A549 (cell line): ENCODE measurements at regions of chr1 and their contacts with region 1.

Region 1: GRCh38 chr1:235513495-235514366 is 9.5 kb upstream of the B3GALNT2 start:
- DNase-seq: peak; percentile 38 to 74
- ATAC-seq: peak; percentile 71 to 79; a peak in 5 of 6 replicates
- H3K4me3 ChIP-seq: no peak overlapping the region
- H3K27ac ChIP-seq: no peak overlapping the region
- H3K4me1 ChIP-seq: no peaks in the 10 kb centered on the region
- CTCF ChIP-seq: peak; percentile 96
- EP300 ChIP-seq: no peak
- POLR2A ChIP-seq: no peak
- RAD21 ChIP-seq: peak; percentile 86 to 88

Region 2: GRCh38 chr1:235527196-235527814 is 13.6 kb after region 1 on chr1:
- CTCF ChIA-PET with region 1: interaction called, 14 read pairs
- POLR2A ChIA-PET with region 1: no interaction called
- DNase-seq: no peak
- ATAC-seq: no peak
- H3K4me3 ChIP-seq: no peak overlapping the region
- H3K27ac ChIP-seq: no peak overlapping the region
- H3K4me1 ChIP-seq: peaks cover 2% of the 10 kb centered on the region; the same call in 2 of the 3 replicates
- CTCF ChIP-seq: no peak
- EP300 ChIP-seq: no peak
- POLR2A ChIP-seq: no peak
- RAD21 ChIP-seq: no peak

Region 3: DNA sequence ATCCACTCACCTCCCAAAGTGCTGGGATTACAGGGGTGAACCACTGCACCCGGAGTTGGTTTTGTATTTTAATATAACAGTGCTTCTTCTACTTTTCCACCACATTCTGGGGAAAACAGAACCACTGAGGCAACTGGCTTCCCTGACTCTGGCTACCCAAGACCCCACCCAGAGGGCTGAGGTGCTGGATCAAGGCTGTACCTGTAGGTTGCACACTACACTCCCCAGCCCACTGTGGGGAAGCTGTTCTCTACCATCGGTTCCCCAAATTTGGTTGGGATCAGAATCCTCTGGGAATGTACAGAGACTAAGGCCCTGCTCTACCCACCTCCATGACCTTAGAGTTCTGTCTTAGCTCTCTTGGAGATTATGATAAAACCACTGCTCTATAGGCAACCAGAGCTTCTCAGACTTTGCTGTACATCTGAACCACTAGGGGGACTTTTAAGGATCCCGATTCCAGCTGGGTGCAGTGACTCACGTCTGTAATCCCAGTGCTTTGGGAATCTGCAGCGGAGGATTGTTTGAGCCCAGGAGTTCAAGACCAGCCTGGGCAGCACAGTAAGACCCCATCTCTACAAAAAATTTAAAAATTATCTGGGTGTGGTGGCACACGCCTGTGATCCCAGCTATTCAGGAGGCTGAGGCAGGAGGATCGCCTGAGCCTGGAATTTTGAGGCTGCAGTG is 84.3 kb after region 1 on chr1:
- CTCF ChIA-PET with region 1: interaction called, 12 read pairs
- POLR2A ChIA-PET with region 1: no interaction called
- DNase-seq: peak; percentile 58 to 71
- ATAC-seq: peak; percentile 92 to 93
- H3K4me3 ChIP-seq: no peak overlapping the region
- H3K27ac ChIP-seq: no peak overlapping the region
- H3K4me1 ChIP-seq: no peaks in the 10 kb centered on the region
- CTCF ChIP-seq: peak; percentile 46
- EP300 ChIP-seq: no peak
- POLR2A ChIP-seq: no peak
- RAD21 ChIP-seq: peak; percentile 30 to 42; a peak in 3 of 5 replicates

Region 4: DNA sequence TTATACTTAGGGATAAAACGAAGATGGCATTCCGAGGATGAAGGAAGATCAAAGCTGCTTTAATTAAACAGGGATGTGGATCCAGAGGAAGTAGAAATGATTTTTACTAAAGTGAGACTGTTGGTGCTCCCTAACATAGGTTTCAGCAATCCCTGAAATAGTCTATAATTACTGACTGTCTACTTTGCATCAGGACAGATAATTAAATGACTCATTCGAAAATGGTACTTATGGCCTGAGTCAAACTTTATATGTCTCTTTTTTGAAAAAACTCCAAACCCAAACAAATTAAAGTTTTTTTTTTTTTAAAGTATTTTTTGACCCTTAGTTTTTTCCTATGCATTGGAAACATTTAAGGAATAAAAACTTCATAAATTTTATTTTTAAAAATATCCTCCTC is 262.7 kb after region 1 on chr1:
- CTCF ChIA-PET with region 1: interaction called, 59 read pairs
- POLR2A ChIA-PET with region 1: no interaction called
- DNase-seq: no peak
- ATAC-seq: no peak
- H3K4me3 ChIP-seq: no peak overlapping the region
- H3K27ac ChIP-seq: no peak overlapping the region
- H3K4me1 ChIP-seq: no peaks in the 10 kb centered on the region
- CTCF ChIP-seq: no peak
- EP300 ChIP-seq: no peak
- POLR2A ChIP-seq: no peak
- RAD21 ChIP-seq: no peak